Left ventricle myocardium inferior (tissue), 1 donor: ENCODE measurements at regions of chr6 and their contacts with region 1.

Region 1: DNA sequence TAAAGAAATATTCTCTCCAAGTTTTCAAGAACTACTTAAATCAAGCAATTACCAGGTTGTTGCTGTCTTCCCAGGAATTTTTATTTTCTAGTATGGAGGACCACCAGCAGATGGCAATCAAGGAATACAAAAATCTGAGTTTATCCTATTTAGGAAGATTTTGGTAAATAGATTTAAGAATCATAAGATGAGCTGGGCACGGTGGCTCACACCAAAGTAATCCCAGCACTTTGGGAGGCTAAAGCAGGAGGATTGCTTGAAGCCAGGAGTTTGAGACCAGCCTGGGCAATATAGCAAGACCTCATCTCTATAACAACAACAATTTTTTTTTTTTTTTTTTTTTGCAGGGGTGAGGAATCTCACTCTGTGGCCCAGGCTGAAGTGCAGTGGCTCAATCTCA is 19.3 kb upstream of the SEC63 start:
- DNase-seq: no peak
- H3K4me3 ChIP-seq: no peak overlapping the region
- H3K27ac ChIP-seq: no peak overlapping the region
- H3K4me1 ChIP-seq: no peaks in the 10 kb centered on the region
- H3K27me3 ChIP-seq: peaks cover 5% of the 10 kb centered on the region
- CTCF ChIP-seq: peak; percentile 46

Region 2: GRCh38 chr6:108027594-108027993 is 50.3 kb after region 1 on chr6:
- intact Hi-C with region 1: no loop called
- DNase-seq: no peak
- H3K4me3 ChIP-seq: no peak overlapping the region
- H3K27ac ChIP-seq: no peak overlapping the region
- H3K4me1 ChIP-seq: no peaks in the 10 kb centered on the region
- H3K27me3 ChIP-seq: no peaks in the 10 kb centered on the region
- CTCF ChIP-seq: no peak

Region 3: DNA sequence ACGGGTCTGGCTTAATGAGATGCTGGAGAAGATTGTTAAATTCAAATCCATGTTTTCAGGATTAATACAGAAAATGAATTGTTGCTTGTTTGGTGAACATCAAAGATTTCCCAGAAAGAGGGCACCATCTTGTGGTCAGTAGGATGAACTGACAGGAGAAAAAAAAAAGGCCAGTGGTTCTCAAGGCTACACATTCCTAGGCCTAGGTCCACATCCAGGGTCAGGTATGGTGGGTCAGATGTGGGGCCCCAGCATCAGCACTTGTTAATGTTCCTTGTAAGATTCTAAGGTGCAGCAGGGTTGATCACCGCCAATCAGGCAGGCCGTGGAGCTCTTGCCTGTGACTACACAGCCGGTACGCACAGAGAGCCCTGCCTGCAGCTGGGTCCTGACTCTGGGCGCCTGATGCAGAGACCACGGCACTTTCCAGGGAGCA is 549.5 kb after region 1 on chr6:
- intact Hi-C with region 1: loop called (anchors 10 kb)
- DNase-seq: no peak
- H3K4me3 ChIP-seq: no peak overlapping the region
- H3K27ac ChIP-seq: no peak overlapping the region
- H3K4me1 ChIP-seq: no peaks in the 10 kb centered on the region
- H3K27me3 ChIP-seq: no peaks in the 10 kb centered on the region
- CTCF ChIP-seq: peak; percentile 89